ENCODE measurements at regions of chr9 and their contacts with region 1.

Region 1: GRCh38 chr9:72232778-72233177 is 83.5 kb downstream of the GDA start:
- DNase-seq: no peak
- H3K4me3 Mint-ChIP-seq: no peak overlapping the region
- H3K27ac Mint-ChIP-seq: no peak overlapping the region
- H3K4me1 Mint-ChIP-seq: no peaks in the 10 kb centered on the region
- H3K27me3 Mint-ChIP-seq: no peaks in the 10 kb centered on the region
- CTCF ChIP-seq: no peak

Region 2: GRCh38 chr9:71655151-71655550 is 577.6 kb before region 1 on chr9:
- CTCF ChIA-PET with region 1: no interaction called
- intact Hi-C with region 1: no loop called
- DNase-seq: no peak
- H3K4me3 Mint-ChIP-seq: no peak overlapping the region
- H3K27ac Mint-ChIP-seq: no peak overlapping the region
- H3K4me1 Mint-ChIP-seq: no peaks in the 10 kb centered on the region
- H3K27me3 Mint-ChIP-seq: no peaks in the 10 kb centered on the region
- CTCF ChIP-seq: no peak

Region 3: GRCh38 chr9:72292256-72292682 is 59.5 kb after region 1 on chr9:
- CTCF ChIA-PET with region 1: no interaction called
- intact Hi-C with region 1: no loop called
- DNase-seq: peak; percentile 12
- H3K4me3 Mint-ChIP-seq: peak overlapping the region; percentile 50
- H3K27ac Mint-ChIP-seq: peak overlapping the region; percentile 97
- H3K4me1 Mint-ChIP-seq: peaks cover 33% of the 10 kb centered on the region
- H3K27me3 Mint-ChIP-seq: no peaks in the 10 kb centered on the region
- CTCF ChIP-seq: no peak

Region 4: DNA sequence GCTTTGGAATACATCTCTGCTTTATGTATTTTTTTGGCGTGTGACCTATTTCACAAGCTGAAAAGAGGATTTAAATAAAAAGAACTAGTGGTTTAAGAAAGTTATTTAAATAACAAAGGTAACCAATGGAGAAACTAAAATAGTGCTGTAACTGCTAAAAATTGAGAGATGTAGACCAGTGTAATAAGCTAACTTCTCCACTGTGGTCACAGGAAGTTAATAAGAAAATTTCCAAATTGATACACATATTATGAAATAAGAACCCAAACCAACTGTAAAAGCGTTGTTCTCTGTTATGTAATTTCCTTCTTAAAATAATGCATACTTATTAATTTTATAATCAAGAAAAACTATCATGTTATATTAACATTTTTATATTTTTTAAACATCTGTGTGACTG is 161.3 kb after region 1 on chr9:
- CTCF ChIA-PET with region 1: interaction called, 10 read pairs
- intact Hi-C with region 1: no loop called
- DNase-seq: no peak
- H3K4me3 Mint-ChIP-seq: no peak overlapping the region
- H3K27ac Mint-ChIP-seq: no peak overlapping the region
- H3K4me1 Mint-ChIP-seq: no peaks in the 10 kb centered on the region
- H3K27me3 Mint-ChIP-seq: no peaks in the 10 kb centered on the region
- CTCF ChIP-seq: no peak